Posterior vena cava (tissue), 2 donors: ENCODE measurements at regions of chr16 and their contacts with region 1.

Region 1: DNA sequence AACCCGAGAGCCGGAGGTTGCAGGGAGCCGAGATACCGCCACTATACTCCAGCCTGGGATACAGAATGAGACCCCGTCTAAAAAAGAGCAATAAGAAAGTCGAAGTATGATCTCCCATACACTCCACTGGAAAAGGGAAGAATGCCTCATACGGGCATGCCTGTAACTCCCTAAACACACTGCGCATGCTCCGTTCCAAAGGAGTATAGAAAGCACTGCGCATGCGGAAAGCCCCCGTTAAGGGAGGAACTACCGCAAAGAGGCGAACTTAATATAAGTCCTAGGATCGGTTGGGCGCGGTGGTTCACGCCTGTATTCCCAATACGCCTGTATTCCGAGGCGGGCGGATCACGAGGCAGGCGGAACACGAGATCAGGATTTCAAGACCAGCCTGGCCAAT is 313.1 kb upstream of the ERCC4 start:
- DNase-seq: no peak

Region 2: DNA sequence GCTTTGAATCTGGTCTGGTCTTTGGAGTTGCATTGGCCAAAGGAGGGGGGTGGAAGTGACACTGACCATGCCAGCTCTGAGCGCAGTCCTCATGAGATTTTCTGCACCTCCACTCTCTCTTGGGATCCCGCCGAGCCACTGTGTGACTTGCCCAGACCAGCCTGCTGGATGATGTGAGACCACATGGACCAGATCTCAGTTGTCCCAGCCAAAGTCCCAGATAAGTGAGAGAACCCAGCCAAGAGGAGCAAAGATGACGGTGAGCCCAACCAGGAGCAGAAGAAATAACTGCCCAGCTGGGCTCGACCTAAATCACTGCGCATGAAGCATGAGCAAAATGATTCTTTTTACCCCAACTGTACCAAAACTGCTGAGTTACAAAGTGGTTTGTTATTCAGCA is 216.7 kb after region 1 on chr16:
- intact Hi-C with region 1: loop called in 1 of 2 experiments (anchors 5 kb)
- DNase-seq: no peak